CD4-positive, alpha-beta memory T cell (primary cell): ENCODE measurements at regions of chr2 and their contacts with region 1.

Region 1: GRCh38 chr2:148509288-148509902 is 135.2 kb upstream of the EPC2 start:
- DNase-seq: peak; percentile 80 to 88 (median 83)
- H3K4me3 ChIP-seq: peak overlapping the region in 1 of 2 donors; percentile 45
- H3K4me3 Mint-ChIP-seq: peak overlapping the region; percentile 63 to 86 (median 82)
- H3K27ac ChIP-seq: peak overlapping the region; percentile 10
- H3K27ac Mint-ChIP-seq: peak overlapping the region; percentile 76 to 94 (median 88)
- H3K4me1 ChIP-seq: peaks cover 14% of the 10 kb centered on the region
- H3K4me1 Mint-ChIP-seq: peaks cover 9 to 23% (median 15%) of the 10 kb centered on the region in 4 donors
- H3K27me3 ChIP-seq: no peaks in the 10 kb centered on the region
- H3K27me3 Mint-ChIP-seq: no peaks in the 10 kb centered on the region

Region 2: DNA sequence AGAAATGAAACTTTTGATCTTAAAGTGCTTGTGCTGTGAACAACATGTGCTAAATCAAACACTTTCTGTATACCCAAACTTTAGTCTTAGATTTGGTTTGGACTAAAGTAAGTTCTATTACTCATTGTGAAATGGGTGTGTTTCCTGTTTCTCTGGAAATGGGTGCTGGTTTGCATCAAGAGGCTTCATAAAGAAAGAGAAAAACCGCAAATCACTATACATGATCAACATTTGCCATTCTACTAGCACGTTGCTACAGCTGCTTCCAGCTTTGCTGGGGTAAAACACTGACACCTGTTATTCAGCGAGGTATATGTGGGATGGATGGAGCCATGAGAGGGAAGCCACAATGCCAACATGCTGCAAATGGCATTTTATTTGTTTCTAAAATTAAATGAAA is 1211.6 kb before region 1 on chr2:
- CTCF ChIA-PET with region 1: no interaction called
- POLR2A ChIA-PET with region 1: no interaction called
- intact Hi-C with region 1: loop called (anchors 10 kb)
- DNase-seq: peak; percentile 60 to 67 (median 64)
- H3K4me3 ChIP-seq: no peak overlapping the region
- H3K4me3 Mint-ChIP-seq: peak overlapping the region in 7 of 8 donors; percentile 27 to 79 (median 64)
- H3K27ac ChIP-seq: peak overlapping the region; percentile 25
- H3K27ac Mint-ChIP-seq: peak overlapping the region; percentile 79 to 97 (median 89)
- H3K4me1 ChIP-seq: peaks cover 72% of the 10 kb centered on the region
- H3K4me1 Mint-ChIP-seq: peaks cover 56 to 83% (median 65%) of the 10 kb centered on the region in 4 donors
- H3K27me3 ChIP-seq: no peaks in the 10 kb centered on the region
- H3K27me3 Mint-ChIP-seq: no peaks in the 10 kb centered on the region

Region 3: GRCh38 chr2:147989809-147990403 is 519.5 kb before region 1 on chr2:
- CTCF ChIA-PET with region 1: interaction called, 89 read pairs
- POLR2A ChIA-PET with region 1: interaction called, 6 read pairs
- intact Hi-C with region 1: loop called (anchors 1 kb)
- DNase-seq: peak; percentile 45 to 61 (median 58)
- H3K4me3 ChIP-seq: no peak overlapping the region
- H3K4me3 Mint-ChIP-seq: no peak overlapping the region
- H3K27ac ChIP-seq: no peak overlapping the region
- H3K27ac Mint-ChIP-seq: peak overlapping the region in 3 of 7 donors; percentile 7 to 72 (median 53)
- H3K4me1 ChIP-seq: no peaks in the 10 kb centered on the region
- H3K4me1 Mint-ChIP-seq: peaks cover 14 to 29% (median 19%) of the 10 kb centered on the region in 4 donors
- H3K27me3 ChIP-seq: no peaks in the 10 kb centered on the region
- H3K27me3 Mint-ChIP-seq: no peaks in the 10 kb centered on the region

Region 4: GRCh38 chr2:148495586-148495985 is 13.8 kb before region 1 on chr2:
- CTCF ChIA-PET with region 1: interaction called, 20 read pairs
- POLR2A ChIA-PET with region 1: interaction called, 3 read pairs
- intact Hi-C with region 1: no loop called
- DNase-seq: no peak
- H3K4me3 ChIP-seq: no peak overlapping the region
- H3K4me3 Mint-ChIP-seq: no peak overlapping the region
- H3K27ac ChIP-seq: no peak overlapping the region
- H3K27ac Mint-ChIP-seq: peak overlapping the region in 1 of 7 donors; percentile 48
- H3K4me1 ChIP-seq: no peaks in the 10 kb centered on the region
- H3K4me1 Mint-ChIP-seq: no peaks in the 10 kb centered on the region
- H3K27me3 ChIP-seq: no peaks in the 10 kb centered on the region
- H3K27me3 Mint-ChIP-seq: no peaks in the 10 kb centered on the region

Region 5: GRCh38 chr2:148540022-148540421 is 30.6 kb after region 1 on chr2:
- CTCF ChIA-PET with region 1: interaction called, 15 read pairs
- POLR2A ChIA-PET with region 1: no interaction called
- intact Hi-C with region 1: no loop called
- DNase-seq: peak in 2 of 5 donors; percentile 17 to 25
- H3K4me3 ChIP-seq: peak overlapping the region in 1 of 2 donors; percentile 13
- H3K4me3 Mint-ChIP-seq: peak overlapping the region; percentile 15 to 79 (median 55)
- H3K27ac ChIP-seq: no peak overlapping the region
- H3K27ac Mint-ChIP-seq: peak overlapping the region; percentile 35 to 89 (median 78)
- H3K4me1 ChIP-seq: peaks cover 22% of the 10 kb centered on the region
- H3K4me1 Mint-ChIP-seq: peaks cover 19 to 55% (median 37%) of the 10 kb centered on the region in 4 donors
- H3K27me3 ChIP-seq: no peaks in the 10 kb centered on the region
- H3K27me3 Mint-ChIP-seq: no peaks in the 10 kb centered on the region

Region 6: DNA sequence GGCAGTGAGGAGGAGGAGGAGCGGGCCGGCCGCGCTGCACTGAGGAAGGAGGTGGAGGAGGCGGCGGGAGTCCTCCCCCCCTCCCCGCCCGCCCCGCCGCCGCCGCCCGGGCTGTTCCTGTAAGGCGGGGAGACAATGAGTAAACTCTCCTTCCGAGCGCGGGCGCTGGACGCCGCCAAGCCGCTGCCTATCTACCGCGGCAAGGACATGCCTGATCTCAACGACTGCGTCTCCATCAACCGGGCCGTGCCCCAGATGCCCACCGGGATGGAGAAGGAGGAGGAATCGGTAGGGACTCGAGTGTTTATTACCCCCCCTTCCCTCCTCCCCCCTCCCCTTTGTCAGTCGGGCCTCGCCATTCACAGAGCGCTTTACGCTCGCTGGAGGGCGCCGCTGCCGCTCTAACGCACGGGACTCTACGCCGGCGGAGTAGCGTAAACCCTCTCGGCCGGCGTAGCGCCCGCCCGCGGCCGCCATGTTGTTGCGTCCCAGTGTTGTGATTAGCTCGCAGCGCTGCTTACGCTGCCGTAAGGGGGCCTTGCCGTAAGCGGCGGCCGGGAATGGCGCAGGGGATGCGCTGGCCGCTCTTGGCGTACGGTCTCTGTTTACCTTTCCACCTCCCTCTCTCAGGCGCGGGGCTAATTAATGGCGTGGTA is 135.6 kb after region 1 on chr2:
- CTCF ChIA-PET with region 1: interaction called, 9 read pairs
- POLR2A ChIA-PET with region 1: interaction called, 13 read pairs
- intact Hi-C with region 1: loop called (anchors 1 kb)
- DNase-seq: peak; percentile 93 to 98 (median 95)
- H3K4me3 ChIP-seq: peak overlapping the region; percentile 88 to 99
- H3K4me3 Mint-ChIP-seq: peak overlapping the region; percentile 91 to 99 (median 95)
- H3K27ac ChIP-seq: peak overlapping the region; percentile 87
- H3K27ac Mint-ChIP-seq: peak overlapping the region; percentile 93 to 99 (median 97)
- H3K4me1 ChIP-seq: peaks cover 48% of the 10 kb centered on the region
- H3K4me1 Mint-ChIP-seq: peaks cover 24 to 45% (median 36%) of the 10 kb centered on the region in 4 donors
- H3K27me3 ChIP-seq: no peaks in the 10 kb centered on the region
- H3K27me3 Mint-ChIP-seq: no peaks in the 10 kb centered on the region

Region 7: DNA sequence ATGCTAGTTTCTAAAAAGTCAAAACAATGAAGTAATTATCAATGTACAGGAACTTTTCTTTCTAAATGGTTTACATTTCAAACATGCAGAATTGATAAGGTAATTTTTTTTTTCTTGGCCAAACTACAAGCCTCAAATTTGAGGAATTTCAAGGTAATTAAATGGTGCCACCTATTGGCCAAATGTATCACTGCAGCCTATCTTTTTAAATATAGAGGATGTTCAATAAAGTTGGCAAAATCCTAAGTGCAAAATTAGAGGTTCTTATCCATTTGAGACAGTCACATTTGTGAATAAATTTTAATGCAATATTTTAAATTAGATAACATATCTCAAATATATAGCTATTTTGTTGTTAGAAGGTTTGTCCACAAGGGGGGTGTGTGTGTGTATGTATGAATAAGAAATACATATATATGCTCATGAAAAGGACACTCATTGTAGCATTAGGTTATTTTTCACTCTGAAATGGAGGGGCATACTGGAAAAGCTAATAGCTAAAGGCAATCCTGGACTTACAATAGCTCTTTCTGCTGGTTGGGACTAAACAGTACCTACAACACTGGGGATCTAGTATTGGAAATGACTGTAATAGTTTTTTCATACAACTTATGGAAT is 1052.0 kb after region 1 on chr2:
- CTCF ChIA-PET with region 1: no interaction called
- POLR2A ChIA-PET with region 1: no interaction called
- intact Hi-C with region 1: loop called (anchors 10 kb)
- DNase-seq: peak in 4 of 5 donors; percentile 35 to 45 (median 40)
- H3K4me3 ChIP-seq: no peak overlapping the region
- H3K4me3 Mint-ChIP-seq: no peak overlapping the region
- H3K27ac ChIP-seq: no peak overlapping the region
- H3K27ac Mint-ChIP-seq: no peak overlapping the region
- H3K4me1 ChIP-seq: no peaks in the 10 kb centered on the region
- H3K4me1 Mint-ChIP-seq: peaks cover 0 to 3% (median 1%) of the 10 kb centered on the region in 4 donors
- H3K27me3 ChIP-seq: no peaks in the 10 kb centered on the region
- H3K27me3 Mint-ChIP-seq: peaks cover 1 to 2% of the 10 kb centered on the region in 2 donors